K562 (cell line): ENCODE measurements at regions of chr19 and their contacts with region 1.

Region 1: DNA sequence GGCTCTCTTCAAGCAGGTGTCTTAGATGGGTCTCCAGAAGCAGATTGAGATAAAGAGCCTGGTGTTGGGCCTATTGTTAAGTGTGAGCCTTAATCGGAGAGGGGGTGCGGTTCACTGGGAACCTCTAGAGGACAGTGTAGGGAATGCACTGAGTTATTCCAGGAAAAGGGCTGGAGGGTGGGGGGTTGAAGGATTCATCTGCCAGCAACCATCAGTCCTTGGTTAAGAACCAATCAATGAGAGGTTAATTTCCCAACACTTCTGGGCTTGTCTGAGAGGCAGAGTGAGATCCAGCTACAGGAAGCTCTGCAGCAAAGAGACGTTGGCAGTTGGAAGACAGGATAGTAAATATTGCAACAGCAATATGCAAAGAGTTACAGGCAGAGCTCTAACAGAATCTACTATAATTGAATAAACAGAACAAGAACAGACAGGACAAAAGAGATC is 28.7 kb downstream of the CYP4F2 start:
- DNase-seq: peak; percentile 75 to 88 (median 79)
- ATAC-seq: peak; percentile 97
- H3K4me3 ChIP-seq: no peak overlapping the region
- H3K27ac ChIP-seq: no peak overlapping the region
- H3K4me1 ChIP-seq: peaks cover 8 to 17% of the 10 kb centered on the region in 2 experiments
- H3K27me3 ChIP-seq: peaks cover 0 to 6% of the 10 kb centered on the region in 2 experiments; a peak in 2 of 5 replicates
- CTCF ChIP-seq: peak; percentile 80 to 94 (median 82)
- EP300 ChIP-seq: no peak; the same call in 1 of the 2 replicates
- POLR2A ChIP-seq: no peak
- RAD21 ChIP-seq: peak; percentile 86 to 93

Region 2: GRCh38 chr19:15810335-15810734 is 58.8 kb before region 1 on chr19:
- CTCF ChIA-PET with region 1: interaction called, 5 read pairs
- POLR2A ChIA-PET with region 1: no interaction called
- in situ Hi-C with region 1: no loop called
- intact Hi-C with region 1: loop called (anchors 2 kb)
- DNase-seq: peak; percentile 29 to 48 (median 46)
- ATAC-seq: peak; percentile 74
- H3K4me3 ChIP-seq: no peak overlapping the region
- H3K27ac ChIP-seq: no peak overlapping the region
- H3K4me1 ChIP-seq: no peaks in the 10 kb centered on the region; a peak in 1 of 5 replicates
- H3K27me3 ChIP-seq: peaks cover 10 to 35% of the 10 kb centered on the region in 2 experiments; a peak in 4 of 5 replicates
- CTCF ChIP-seq: peak; percentile 42 to 69 (median 48)
- EP300 ChIP-seq: no peak
- POLR2A ChIP-seq: no peak
- RAD21 ChIP-seq: peak; percentile 30 to 53; a peak in 3 of 4 replicates

Region 3: DNA sequence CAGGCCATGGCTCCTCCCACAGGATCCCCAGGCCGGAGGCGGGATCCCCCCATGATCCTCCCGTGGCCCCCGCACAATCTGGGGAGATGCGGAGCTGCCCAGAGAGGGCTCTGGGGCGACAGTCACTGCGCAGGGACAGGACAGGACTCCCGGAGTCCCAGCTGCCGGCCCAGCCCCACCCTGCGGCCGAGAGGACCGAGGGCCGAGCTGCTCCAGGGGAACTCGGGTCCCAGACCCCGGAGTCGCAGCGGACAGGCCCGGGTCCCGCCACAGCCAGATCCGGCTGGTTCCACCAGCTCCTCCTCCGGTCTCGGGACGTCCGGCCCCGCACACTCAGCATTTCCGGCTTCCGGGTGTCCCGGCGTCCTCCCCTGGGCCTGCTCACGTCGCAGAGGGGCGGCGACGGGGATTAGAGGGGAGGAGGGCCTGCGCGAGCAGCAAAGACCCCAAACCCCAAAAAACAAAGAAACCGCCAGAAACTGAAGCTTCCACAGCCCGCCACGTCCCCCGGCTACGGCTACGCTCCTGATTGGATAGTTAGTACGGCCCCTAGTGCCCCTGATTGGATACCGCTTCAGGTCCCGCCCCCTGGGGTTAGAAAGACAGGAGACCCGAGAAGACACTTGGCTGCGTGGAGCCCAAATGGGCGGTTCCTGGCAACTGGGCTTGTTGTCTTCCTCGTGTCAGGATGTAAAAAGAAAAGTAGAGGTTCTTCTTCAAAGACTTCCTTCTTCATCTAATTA is 32.4 kb before region 1 on chr19:
- CTCF ChIA-PET with region 1: no interaction called
- POLR2A ChIA-PET with region 1: interaction called, 4 read pairs
- in situ Hi-C with region 1: no loop called
- intact Hi-C with region 1: loop called (anchors 1 kb)
- DNase-seq: peak; percentile 96 to 98 (median 96)
- ATAC-seq: peak; percentile 93
- H3K4me3 ChIP-seq: peak overlapping the region; percentile 66
- H3K27ac ChIP-seq: peak overlapping the region; percentile 99
- H3K4me1 ChIP-seq: peaks cover 25 to 53% of the 10 kb centered on the region in 2 experiments
- H3K27me3 ChIP-seq: no peaks in the 10 kb centered on the region
- CTCF ChIP-seq: no peak
- EP300 ChIP-seq: no peak
- POLR2A ChIP-seq: peak; percentile 83
- RAD21 ChIP-seq: peak in 1 of 2 experiments; percentile 15; a peak in 1 of 4 replicates

Region 4: DNA sequence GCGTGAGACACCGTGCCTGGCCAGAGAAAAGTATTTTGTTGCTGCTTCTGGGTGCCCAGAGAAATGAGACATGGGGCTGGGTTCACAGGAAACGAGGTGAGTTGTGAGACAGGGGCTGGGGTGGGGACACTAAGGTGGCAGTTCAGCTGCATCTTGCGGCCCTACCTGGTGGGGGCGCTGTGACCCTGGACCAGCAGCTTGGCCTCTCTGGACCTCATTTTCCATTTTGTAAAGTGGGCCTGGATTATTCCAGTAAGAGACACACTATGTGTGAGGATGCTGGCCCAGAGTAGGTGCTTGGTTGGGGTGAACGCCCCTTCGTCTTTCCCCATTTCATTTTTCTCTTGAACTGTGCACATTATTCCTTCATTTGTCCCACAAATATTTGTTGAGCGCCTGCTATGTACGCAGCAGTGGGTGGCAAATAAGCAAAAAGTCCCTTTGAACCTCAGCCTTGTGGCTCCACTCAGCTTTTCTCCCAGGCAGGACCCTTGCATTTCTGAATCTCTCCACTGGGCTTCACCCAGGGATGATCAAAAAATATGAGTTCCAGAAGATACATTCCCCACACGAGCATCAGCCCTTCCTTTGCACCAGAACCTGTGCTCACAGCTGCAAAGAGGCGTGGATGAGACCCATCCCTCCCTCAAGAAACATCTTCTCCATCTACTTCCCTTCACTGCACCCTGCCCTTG is 27.1 kb before region 1 on chr19:
- CTCF ChIA-PET with region 1: no interaction called
- POLR2A ChIA-PET with region 1: interaction called, 4 read pairs
- in situ Hi-C with region 1: no loop called
- intact Hi-C with region 1: loop called (anchors 1 kb)
- DNase-seq: peak; percentile 47 to 53 (median 48)
- ATAC-seq: no peak
- H3K4me3 ChIP-seq: no peak overlapping the region
- H3K27ac ChIP-seq: no peak overlapping the region
- H3K4me1 ChIP-seq: peaks cover 25 to 42% of the 10 kb centered on the region in 2 experiments
- H3K27me3 ChIP-seq: no peaks in the 10 kb centered on the region
- CTCF ChIP-seq: peak; percentile 63 to 80 (median 64)
- EP300 ChIP-seq: no peak
- POLR2A ChIP-seq: no peak
- RAD21 ChIP-seq: peak; percentile 24 to 58